Activated CD4-positive, alpha-beta memory T cell treated with anti-CD3 and anti-CD28 coated beads for 36 hours (primary cell): ENCODE measurements at regions of chr11 and their contacts with region 1.

Region 1: DNA sequence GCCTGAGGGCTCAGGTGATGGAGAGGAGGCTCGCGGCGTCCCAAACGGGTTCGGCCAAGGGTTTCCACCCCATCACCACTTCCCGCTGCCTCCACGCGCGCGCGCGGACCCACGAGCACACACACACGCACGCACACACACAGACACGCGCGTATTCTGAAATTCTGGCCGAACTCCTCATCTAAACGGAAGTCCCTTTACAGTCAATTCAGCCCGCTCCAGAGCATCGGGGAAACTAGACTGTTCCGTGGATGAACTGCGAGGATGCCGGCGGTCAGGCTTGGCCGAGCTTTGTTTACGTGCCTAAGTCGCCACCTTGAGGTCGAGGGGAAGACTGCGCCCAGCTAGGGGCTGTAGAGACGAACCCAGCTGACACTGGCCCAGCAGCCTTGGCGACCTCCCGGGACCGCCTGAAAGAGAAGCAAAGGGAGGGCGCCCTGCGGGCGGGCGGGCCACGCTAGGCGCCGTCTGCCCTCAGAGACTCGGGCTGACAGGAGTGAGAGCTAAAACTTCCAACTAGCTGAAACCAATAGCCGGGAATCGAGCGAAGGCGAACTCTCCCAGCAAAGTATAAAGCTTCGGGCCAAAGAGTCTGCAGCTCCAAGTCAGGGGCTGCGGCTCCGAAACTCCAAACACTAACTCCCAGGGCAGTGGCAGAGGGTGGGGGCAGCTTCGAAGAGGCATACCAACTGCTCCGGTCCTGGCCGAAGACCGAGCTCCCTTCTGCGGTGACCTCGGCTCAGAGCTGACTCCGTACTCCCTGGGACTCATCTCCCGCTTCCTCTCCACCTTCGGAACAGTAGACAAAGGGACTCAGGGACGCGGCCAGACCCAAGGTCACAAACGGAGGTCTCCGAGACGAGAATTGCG is 124.7 kb upstream of the C11orf58 start:
- DNase-seq: peak; percentile 82
- H3K4me3 Mint-ChIP-seq: peak overlapping the region; percentile 63
- H3K27ac Mint-ChIP-seq: no peak overlapping the region
- H3K4me1 Mint-ChIP-seq: peaks cover 24% of the 10 kb centered on the region
- H3K27me3 Mint-ChIP-seq: peaks cover 49% of the 10 kb centered on the region

Region 2: DNA sequence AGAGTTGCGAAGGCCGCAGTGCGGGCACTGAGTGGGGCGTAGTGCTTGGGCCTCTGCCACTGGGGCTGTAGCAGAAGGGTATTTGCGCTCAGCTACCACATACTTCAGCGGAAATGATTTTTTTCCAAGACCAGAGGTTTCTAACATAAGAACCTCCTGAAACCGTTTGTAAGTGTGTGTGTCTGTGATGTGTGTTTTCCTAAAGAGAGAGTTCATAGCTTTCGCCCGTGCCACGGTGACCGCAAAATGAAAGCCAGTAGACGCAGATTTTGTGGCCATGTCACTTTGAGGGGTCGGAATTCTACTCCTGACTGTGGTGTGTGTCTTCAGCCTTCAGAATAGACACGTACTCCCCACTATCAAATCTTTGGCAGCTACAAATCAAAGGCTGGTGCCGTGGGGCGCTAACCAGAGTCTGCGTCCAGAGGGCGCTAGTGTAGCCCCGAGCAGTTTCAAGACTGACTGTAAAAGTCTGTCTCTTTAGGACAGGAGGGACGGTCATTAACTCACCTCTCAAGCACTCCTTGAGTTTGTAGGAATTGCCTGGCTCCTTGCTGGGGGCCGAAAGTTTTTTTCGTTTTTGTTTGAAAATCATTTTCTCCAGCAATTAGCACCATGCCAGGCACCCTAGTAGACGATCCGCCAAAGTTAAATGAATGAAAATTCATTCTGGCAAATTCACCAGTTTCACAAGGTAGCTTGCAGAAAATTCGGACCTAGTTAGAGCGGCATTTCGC is 1639.1 kb before region 1 on chr11:
- CTCF ChIA-PET with region 1: no interaction called
- POLR2A ChIA-PET with region 1: no interaction called
- intact Hi-C with region 1: loop called (anchors 10 kb)
- DNase-seq: peak; percentile 83
- H3K4me3 Mint-ChIP-seq: peak overlapping the region; percentile 62
- H3K27ac Mint-ChIP-seq: no peak overlapping the region
- H3K4me1 Mint-ChIP-seq: peaks cover 26% of the 10 kb centered on the region
- H3K27me3 Mint-ChIP-seq: peaks cover 61% of the 10 kb centered on the region

Region 3: GRCh38 chr11:15629690-15630321 is 983.9 kb before region 1 on chr11:
- CTCF ChIA-PET with region 1: interaction called, 11 read pairs
- POLR2A ChIA-PET with region 1: no interaction called
- intact Hi-C with region 1: no loop called
- DNase-seq: peak; percentile 17
- H3K4me3 Mint-ChIP-seq: no peak overlapping the region
- H3K27ac Mint-ChIP-seq: no peak overlapping the region
- H3K4me1 Mint-ChIP-seq: no peaks in the 10 kb centered on the region
- H3K27me3 Mint-ChIP-seq: no peaks in the 10 kb centered on the region

Region 4: GRCh38 chr11:15650105-15650938 is 963.4 kb before region 1 on chr11:
- CTCF ChIA-PET with region 1: interaction called, 19 read pairs
- POLR2A ChIA-PET with region 1: no interaction called
- intact Hi-C with region 1: no loop called
- DNase-seq: peak; percentile 82
- H3K4me3 Mint-ChIP-seq: no peak overlapping the region
- H3K27ac Mint-ChIP-seq: no peak overlapping the region
- H3K4me1 Mint-ChIP-seq: peaks cover 3% of the 10 kb centered on the region
- H3K27me3 Mint-ChIP-seq: peaks cover 17% of the 10 kb centered on the region

Region 5: GRCh38 chr11:15941201-15941770 is 672.5 kb before region 1 on chr11:
- CTCF ChIA-PET with region 1: interaction called, 10 read pairs
- POLR2A ChIA-PET with region 1: no interaction called
- intact Hi-C with region 1: no loop called
- DNase-seq: peak; percentile 25
- H3K4me3 Mint-ChIP-seq: no peak overlapping the region
- H3K27ac Mint-ChIP-seq: no peak overlapping the region
- H3K4me1 Mint-ChIP-seq: no peaks in the 10 kb centered on the region
- H3K27me3 Mint-ChIP-seq: peaks cover 4% of the 10 kb centered on the region